Esophagus muscularis mucosa (tissue), 4 donors: ENCODE measurements at regions of chr9 and their contacts with region 1.

Region 1: DNA sequence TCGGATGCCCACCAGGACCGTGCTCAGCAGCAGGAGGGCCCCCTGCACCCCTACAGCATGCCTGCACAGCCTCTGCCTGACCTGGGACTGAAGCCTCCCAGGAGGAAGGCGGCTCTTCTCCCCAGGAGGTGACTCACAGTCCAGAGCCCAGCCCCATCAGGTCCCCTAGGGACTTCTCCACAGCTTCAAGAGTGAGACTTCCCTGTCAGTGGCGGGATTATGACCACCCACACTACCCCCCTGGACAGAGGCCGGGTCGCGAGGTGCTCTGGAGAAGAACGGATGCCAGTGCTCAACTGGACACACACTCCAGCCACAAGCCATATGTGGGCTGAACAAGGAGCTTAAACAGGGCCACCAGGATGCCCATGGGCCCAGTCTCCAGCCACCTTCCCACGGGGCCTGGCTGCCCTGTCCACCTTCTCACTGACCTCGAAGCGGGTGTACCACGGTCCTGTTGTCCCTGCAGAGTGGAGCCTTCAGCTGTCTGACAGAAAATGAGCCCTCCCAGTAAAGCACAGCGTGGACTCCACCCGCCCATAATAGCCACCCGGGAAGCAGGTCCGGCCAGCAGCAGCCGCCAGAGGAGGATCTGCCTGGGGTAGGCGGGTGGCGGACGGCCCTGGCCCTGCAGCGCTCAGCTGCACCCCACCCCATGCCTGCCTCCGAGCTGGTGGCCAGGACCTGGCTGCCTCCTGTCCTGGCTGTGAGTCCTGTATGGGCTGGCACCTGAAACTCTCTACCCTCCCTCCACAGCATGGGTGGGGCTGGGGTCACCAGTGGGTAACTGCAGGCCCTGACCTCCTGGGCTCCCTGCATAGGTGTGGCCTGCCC is 54.7 kb downstream of the SEMA4D start:
- DNase-seq: no peak
- H3K4me3 ChIP-seq: no peak overlapping the region
- H3K27ac ChIP-seq: no peak overlapping the region
- H3K4me1 ChIP-seq: peaks cover 9 to 34% (median 24%) of the 10 kb centered on the region in 4 donors
- H3K27me3 ChIP-seq: no peaks in the 10 kb centered on the region
- CTCF ChIP-seq: no peak
- EP300 ChIP-seq: no peak
- POLR2A ChIP-seq: no peak

Region 2: GRCh38 chr9:89497978-89498851 is 55.0 kb after region 1 on chr9 and contains the start of gene SEMA4D:
- intact Hi-C with region 1: loop called (anchors 10 kb)
- DNase-seq: no peak
- H3K4me3 ChIP-seq: peak within 1 kb of the TSS; percentile 76 to 89 (median 84)
- H3K27ac ChIP-seq: peak within 1 kb of the TSS; percentile 13 to 60 (median 60)
- H3K4me1 ChIP-seq: peaks cover 5 to 25% (median 22%) of the 10 kb centered on the region in 4 donors
- H3K27me3 ChIP-seq: no peaks in the 10 kb centered on the region
- CTCF ChIP-seq: no peak
- EP300 ChIP-seq: no peak
- POLR2A ChIP-seq: no peak
- total RNA-seq, gene SEMA4D: 7.9 to 14.1 (median 10.6) TPM